ENCODE measurements at regions of chr1 and their contacts with region 1.

Region 1: GRCh38 chr1:210373885-210374599 is 45.3 kb downstream of the HHAT start:
- DNase-seq: peak; percentile 89 to 90
- H3K4me3 ChIP-seq: no peak overlapping the region; a peak in 1 of 8 replicates
- H3K27ac ChIP-seq: peak overlapping the region; percentile 97
- H3K4me1 ChIP-seq: peaks cover 7 to 24% (median 18%) of the 10 kb centered on the region in 4 experiments
- H3K27me3 ChIP-seq: peaks cover 0 to 5% (median 2%) of the 10 kb centered on the region in 4 experiments; a peak in 1 of 7 replicates
- CTCF ChIP-seq: peak; percentile 66 to 96 (median 80)
- EP300 ChIP-seq: peak in 1 of 2 experiments; percentile 87; a peak in 1 of 3 replicates
- POLR2A ChIP-seq: peak; percentile 97 to 100
- RAD21 ChIP-seq: peak; percentile 59 to 68; a peak in 3 of 4 replicates

Region 2: GRCh38 chr1:210233216-210234020 is 140.6 kb before region 1 on chr1:
- CTCF ChIA-PET with region 1: interaction called, 3 read pairs
- POLR2A ChIA-PET with region 1: interaction called, 15 read pairs
- DNase-seq: peak in 1 of 2 experiments; percentile 76
- H3K4me3 ChIP-seq: peak overlapping the region; percentile 54 to 64 (median 62)
- H3K27ac ChIP-seq: no peak overlapping the region
- H3K4me1 ChIP-seq: peaks cover 2 to 19% (median 9%) of the 10 kb centered on the region in 4 experiments; a peak in 6 of 7 replicates
- H3K27me3 ChIP-seq: peaks cover 2 to 59% (median 28%) of the 10 kb centered on the region in 4 experiments
- CTCF ChIP-seq: no peak
- EP300 ChIP-seq: no peak
- POLR2A ChIP-seq: no peak
- RAD21 ChIP-seq: no peak

Region 3: DNA sequence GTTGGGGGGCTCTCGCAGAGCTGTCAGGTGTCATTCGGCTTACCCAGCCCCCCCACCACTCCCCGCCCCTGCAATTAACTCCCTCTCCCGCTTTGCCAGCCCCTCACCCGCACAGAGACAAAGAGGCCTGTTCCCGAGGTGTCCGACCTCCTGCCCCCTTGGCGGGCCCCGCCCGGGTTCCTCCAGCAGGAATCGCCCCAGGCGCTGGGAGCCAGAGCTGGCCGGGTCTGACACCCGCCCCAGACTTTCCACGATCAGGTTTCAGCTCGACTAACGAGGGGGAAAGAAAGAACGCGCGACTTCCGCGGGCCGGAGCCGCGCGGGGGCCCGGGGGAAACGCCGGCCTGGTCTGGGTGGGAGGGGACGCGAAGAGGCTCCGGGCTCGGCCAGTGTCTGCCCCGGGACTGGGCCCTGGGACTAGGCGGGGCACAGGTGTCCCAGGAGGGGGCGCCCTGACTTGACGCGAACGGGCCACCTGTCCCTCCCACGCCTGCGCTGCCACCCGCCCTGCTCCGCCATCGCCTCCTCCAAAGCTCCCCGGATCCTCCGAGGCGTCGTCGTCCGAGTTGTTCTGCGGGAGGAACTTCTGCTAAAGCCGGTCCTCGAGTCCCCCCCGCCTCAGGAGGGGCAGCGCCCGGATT is 81.7 kb before region 1 on chr1:
- CTCF ChIA-PET with region 1: interaction called, 4 read pairs
- POLR2A ChIA-PET with region 1: interaction called, 30 read pairs
- DNase-seq: peak in 1 of 2 experiments; percentile 89
- H3K4me3 ChIP-seq: peak overlapping the region; percentile 42 to 68 (median 50)
- H3K27ac ChIP-seq: no peak overlapping the region
- H3K4me1 ChIP-seq: peaks cover 0 to 13% (median 6%) of the 10 kb centered on the region in 4 experiments; a peak in 5 of 7 replicates
- H3K27me3 ChIP-seq: peaks cover 0 to 13% (median 9%) of the 10 kb centered on the region in 4 experiments; a peak in 4 of 7 replicates
- CTCF ChIP-seq: peak; percentile 37 to 75 (median 55)
- EP300 ChIP-seq: no peak
- POLR2A ChIP-seq: no peak
- RAD21 ChIP-seq: peak in 1 of 2 experiments; percentile 47; a peak in 2 of 4 replicates

Region 4: DNA sequence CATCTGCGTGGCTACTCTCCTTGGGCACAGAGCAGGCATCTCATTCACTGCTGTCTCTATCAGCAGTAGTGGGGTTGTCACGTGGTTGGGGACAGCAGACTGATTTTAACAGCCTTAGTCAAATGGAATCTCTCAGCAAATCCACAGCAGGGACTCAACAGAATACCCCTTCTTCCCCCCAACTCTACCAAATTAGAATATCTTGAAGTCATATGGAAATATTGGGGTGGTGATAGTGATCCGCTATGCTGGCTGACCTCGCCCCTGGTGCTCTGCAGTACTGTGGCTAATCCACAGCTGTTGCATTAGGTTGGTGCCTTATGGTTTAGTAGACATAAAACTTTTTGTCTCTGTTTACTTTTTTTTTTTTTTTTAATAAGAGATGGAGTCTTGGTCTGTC is 21.5 kb before region 1 on chr1:
- CTCF ChIA-PET with region 1: interaction called, 24 read pairs
- POLR2A ChIA-PET with region 1: interaction called, 183 read pairs
- DNase-seq: no peak
- H3K4me3 ChIP-seq: no peak overlapping the region
- H3K27ac ChIP-seq: no peak overlapping the region
- H3K4me1 ChIP-seq: no peaks in the 10 kb centered on the region; a peak in 1 of 7 replicates
- H3K27me3 ChIP-seq: no peaks in the 10 kb centered on the region
- CTCF ChIP-seq: no peak
- EP300 ChIP-seq: no peak
- POLR2A ChIP-seq: no peak
- RAD21 ChIP-seq: no peak

Region 5: DNA sequence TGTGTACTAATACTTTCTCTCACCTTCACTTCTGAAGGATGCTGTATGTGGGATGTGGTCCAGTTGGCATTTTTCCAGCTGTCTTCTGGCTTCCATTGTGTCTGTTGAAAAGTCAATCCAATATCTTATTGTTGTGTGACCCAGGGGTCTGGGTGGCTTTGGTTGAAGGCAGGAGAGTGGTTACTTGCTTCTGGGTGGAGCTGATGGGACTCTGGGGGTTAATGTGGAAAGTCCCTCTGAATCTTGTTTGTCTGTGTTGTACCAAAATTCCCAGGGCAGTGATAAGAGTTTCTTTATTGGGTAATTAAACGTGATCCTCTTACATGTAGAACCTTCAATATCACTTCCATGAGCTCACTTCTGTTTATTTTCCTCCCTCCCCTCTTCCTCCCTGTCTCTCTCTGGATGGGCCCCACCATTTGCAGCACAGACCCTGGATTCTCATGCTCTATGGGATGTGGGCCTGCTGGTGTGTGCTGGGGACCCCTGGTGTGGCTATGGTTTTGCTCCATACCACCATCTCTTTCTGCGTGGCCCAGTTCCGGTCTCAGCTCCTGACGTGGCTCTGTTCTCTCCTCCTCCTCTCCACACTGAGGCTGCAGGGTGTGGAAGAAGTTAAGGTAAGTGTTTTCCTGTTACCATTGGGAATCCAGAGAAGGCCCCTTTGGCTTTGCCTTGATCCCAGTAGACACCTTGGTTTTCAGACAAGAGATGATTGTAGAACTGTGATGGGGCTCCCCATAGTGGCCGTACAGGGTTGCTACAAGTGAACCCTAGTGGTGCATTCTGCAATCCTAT is 26.2 kb after region 1 on chr1:
- CTCF ChIA-PET with region 1: interaction called, 179 read pairs
- POLR2A ChIA-PET with region 1: interaction called, 197 read pairs
- DNase-seq: peak; percentile 7 to 78
- H3K4me3 ChIP-seq: no peak overlapping the region
- H3K27ac ChIP-seq: peak overlapping the region; percentile 34; the same call in 1 of the 2 replicates
- H3K4me1 ChIP-seq: no peaks in the 10 kb centered on the region
- H3K27me3 ChIP-seq: no peaks in the 10 kb centered on the region
- CTCF ChIP-seq: peak; percentile 48 to 98 (median 95)
- EP300 ChIP-seq: no peak
- POLR2A ChIP-seq: no peak
- RAD21 ChIP-seq: peak; percentile 88 to 94

Region 6: DNA sequence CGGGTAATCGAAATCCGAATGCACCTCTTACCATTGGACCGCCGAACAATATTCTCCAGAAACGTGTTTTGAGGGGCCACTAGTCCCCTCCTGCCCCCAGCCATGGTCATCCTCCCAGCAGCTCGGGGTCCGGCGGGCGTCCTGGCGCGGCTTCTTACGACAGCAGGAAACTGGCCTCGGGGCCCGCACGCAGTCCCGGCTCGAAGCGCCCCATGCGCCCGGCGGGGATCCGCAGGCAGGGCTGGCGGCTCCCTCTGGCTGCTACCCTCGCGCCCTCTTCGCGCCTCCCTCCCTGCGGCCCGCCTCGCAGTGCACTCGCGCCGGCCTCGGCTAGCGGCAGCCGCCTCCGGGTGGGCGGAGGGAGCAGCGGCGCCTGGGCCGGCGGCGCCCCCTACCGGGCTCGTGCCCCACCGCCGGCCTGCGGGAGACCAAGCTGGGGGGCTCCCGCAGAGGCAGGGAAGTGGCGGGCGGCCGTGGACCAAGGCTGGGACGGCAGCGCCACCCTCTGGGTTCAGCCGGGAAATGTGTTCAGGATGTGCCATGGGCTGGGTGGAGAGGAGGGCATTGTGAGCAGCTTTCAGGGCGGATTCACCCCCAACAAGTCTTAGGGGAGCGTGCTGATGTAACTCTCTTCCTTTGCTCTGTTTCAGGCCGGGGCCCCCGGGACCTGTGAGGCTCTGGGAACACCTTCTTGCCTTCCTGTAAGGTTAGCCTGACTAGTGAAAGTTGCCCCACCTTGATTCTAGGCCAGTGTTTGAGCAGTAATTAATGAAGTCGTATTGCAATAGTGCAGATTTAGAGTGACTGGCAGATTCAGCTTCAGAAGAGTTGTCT is 760.0 kb after region 1 on chr1 and contains the start of gene KCNH1:
- CTCF ChIA-PET with region 1: interaction called, 7 read pairs
- POLR2A ChIA-PET with region 1: interaction called, 34 read pairs
- DNase-seq: peak; percentile 75 to 96
- H3K4me3 ChIP-seq: peak within 1 kb of the TSS; percentile 48 to 79 (median 64)
- H3K27ac ChIP-seq: no peak within 1 kb of the TSS
- H3K4me1 ChIP-seq: peaks cover 2 to 10% (median 3%) of the 10 kb centered on the region in 4 experiments; a peak in 4 of 7 replicates
- H3K27me3 ChIP-seq: peaks cover 8 to 18% (median 14%) of the 10 kb centered on the region in 4 experiments
- CTCF ChIP-seq: peak; percentile 89 to 98 (median 95)
- EP300 ChIP-seq: peak in 1 of 2 experiments; percentile 75; a peak in 1 of 3 replicates
- POLR2A ChIP-seq: no peak
- RAD21 ChIP-seq: peak; percentile 91 to 96
- total RNA-seq, gene KCNH1: 0.34 and 0.38 TPM in 2 replicates

Measured in H1 (cell line).